ENCODE measurements at regions of chr2 and their contacts with region 1.

Region 1: GRCh38 chr2:169446452-169446851 is 32.8 kb upstream of the BBS5 start:
- DNase-seq: no peak
- ATAC-seq: no peak
- H3K4me3 ChIP-seq: no peak overlapping the region
- H3K27ac ChIP-seq: no peak overlapping the region
- H3K4me1 ChIP-seq: no peaks in the 10 kb centered on the region
- H3K27me3 ChIP-seq: no peaks in the 10 kb centered on the region
- CTCF ChIP-seq: no peak
- POLR2A ChIP-seq: no peak

Region 2: GRCh38 chr2:169771612-169772011 is 325.2 kb after region 1 on chr2:
- in situ Hi-C with region 1: loop called in 1 of 4 experiments (anchors 5 kb)
- intact Hi-C with region 1: no loop called
- DNase-seq: no peak
- ATAC-seq: no peak
- H3K4me3 ChIP-seq: no peak overlapping the region
- H3K27ac ChIP-seq: no peak overlapping the region
- H3K4me1 ChIP-seq: no peaks in the 10 kb centered on the region
- H3K27me3 ChIP-seq: peaks cover 0 to 11% (median 11%) of the 10 kb centered on the region in 3 donors
- CTCF ChIP-seq: no peak
- POLR2A ChIP-seq: no peak

Measured in gastrocnemius medialis (tissue), 4 donors.